CD8-positive, alpha-beta memory T cell (primary cell): ENCODE measurements at regions of chr18 and their contacts with region 1.

Region 1: DNA sequence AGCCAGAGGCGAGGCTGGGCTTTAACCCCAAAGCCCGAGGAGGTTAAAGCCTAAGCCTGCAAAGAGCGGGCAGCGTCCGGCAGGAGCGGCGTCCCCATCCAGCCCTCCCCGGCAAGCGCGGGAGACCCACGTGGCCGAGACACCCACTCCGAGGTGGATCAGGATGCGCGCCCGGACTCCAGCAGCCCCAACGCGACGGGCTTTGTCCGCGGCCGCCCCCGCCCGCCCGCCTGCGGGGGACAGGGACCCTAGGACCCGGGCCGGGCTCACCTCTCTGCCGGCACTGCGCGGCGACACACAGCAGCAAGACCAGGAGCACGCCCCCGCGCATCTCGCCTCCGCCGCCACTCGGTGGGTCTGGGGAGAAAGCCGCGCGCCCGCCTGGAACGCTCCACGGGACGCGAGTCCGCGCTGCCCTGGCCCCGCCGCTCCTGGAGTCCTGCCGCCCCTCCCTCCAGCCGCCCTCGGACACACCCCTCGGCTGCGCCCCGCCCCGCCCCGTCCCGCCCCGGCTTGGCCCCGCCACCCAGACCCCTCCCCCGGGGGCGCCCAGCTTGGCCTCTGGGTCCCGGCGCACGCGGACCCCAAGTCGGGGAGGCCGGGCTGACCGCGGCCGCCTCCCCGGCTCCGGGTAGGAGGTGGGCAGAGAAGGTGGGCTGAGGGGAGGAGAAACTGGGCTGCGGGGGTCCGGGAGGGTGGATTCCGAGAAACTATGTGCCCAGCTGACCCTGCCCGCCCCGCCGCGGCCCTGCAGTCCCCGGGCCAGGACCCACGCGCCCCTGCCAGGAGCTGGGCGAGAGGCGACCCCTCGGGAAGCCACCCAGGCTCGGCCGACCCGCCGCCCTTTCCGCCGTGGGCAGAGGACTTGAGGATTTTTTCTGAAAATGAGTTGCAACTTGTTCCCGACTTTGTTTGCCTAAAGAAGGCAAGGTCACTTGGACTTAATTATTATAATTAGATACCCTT is at the start of gene LAMA1:
- DNase-seq: no peak
- H3K4me3 ChIP-seq: no peak within 1 kb of the TSS
- H3K4me3 Mint-ChIP-seq: peak within 1 kb of the TSS in 2 of 7 donors; percentile 20 to 27
- H3K27ac ChIP-seq: no peak within 1 kb of the TSS
- H3K27ac Mint-ChIP-seq: no peak within 1 kb of the TSS
- H3K4me1 ChIP-seq: no peaks in the 10 kb centered on the region
- H3K4me1 Mint-ChIP-seq: peaks cover 0 to 5% (median 2%) of the 10 kb centered on the region in 3 donors
- H3K27me3 ChIP-seq: no peaks in the 10 kb centered on the region
- H3K27me3 Mint-ChIP-seq: peaks cover 12 to 30% of the 10 kb centered on the region in 2 donors
- total RNA-seq, gene LAMA1: not detected

Region 2: DNA sequence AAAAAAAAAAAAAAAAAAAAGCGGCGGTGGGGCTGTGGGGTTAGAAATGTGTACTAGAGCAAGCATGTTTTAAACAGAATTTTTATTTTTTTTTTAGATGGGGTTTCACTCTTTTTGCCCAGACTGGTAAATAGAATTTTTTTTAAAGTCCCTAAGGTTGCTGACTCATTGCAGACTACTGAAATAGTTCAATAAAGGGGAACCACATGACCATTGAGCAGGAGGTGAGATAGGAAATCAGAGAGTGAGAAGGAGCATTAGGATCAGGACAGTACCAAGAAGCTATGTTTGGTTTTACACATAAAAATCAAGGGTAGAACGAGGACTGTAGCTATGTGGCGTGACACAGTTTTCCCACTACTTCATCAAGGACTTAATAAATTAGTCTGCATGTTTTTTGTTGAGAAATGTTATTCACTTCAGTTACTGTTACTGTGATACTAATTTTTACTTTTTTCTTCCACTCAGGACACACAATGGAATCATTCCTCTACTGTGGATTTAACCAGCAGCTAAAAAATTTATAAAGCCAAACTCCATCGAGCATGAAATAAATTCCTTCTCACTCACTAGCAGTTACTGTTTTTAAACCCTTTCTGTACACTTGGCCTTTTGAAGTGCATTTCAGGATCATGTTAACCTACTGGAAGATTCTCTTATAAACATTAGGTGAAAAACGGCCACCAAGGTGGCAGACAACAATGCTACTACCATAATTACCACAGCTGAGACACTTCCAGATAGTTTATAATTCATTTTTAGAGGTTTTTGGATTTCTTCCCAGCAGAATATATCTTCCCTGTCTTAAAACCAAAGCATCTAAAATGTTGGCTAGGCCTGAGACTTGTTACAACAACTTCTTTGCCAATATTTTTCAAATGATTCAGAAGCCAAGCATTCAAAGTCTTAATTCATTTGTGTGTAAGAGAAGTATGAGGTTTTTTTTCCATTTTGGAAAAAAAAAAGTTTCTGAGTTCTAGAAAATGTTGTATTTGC is 33.3 kb before region 1 on chr18:
- CTCF ChIA-PET with region 1: no interaction called
- POLR2A ChIA-PET with region 1: no interaction called
- DNase-seq: no peak
- H3K4me3 ChIP-seq: no peak overlapping the region
- H3K4me3 Mint-ChIP-seq: no peak overlapping the region
- H3K27ac ChIP-seq: no peak overlapping the region
- H3K27ac Mint-ChIP-seq: no peak overlapping the region
- H3K4me1 ChIP-seq: no peaks in the 10 kb centered on the region
- H3K4me1 Mint-ChIP-seq: no peaks in the 10 kb centered on the region
- H3K27me3 ChIP-seq: no peaks in the 10 kb centered on the region
- H3K27me3 Mint-ChIP-seq: no peaks in the 10 kb centered on the region

Region 3: GRCh38 chr18:7094432-7094831 is 23.2 kb before region 1 on chr18:
- CTCF ChIA-PET with region 1: no interaction called
- POLR2A ChIA-PET with region 1: no interaction called
- DNase-seq: no peak
- H3K4me3 ChIP-seq: no peak overlapping the region
- H3K4me3 Mint-ChIP-seq: no peak overlapping the region
- H3K27ac ChIP-seq: no peak overlapping the region
- H3K27ac Mint-ChIP-seq: no peak overlapping the region
- H3K4me1 ChIP-seq: no peaks in the 10 kb centered on the region
- H3K4me1 Mint-ChIP-seq: no peaks in the 10 kb centered on the region
- H3K27me3 ChIP-seq: no peaks in the 10 kb centered on the region
- H3K27me3 Mint-ChIP-seq: no peaks in the 10 kb centered on the region

Region 4: DNA sequence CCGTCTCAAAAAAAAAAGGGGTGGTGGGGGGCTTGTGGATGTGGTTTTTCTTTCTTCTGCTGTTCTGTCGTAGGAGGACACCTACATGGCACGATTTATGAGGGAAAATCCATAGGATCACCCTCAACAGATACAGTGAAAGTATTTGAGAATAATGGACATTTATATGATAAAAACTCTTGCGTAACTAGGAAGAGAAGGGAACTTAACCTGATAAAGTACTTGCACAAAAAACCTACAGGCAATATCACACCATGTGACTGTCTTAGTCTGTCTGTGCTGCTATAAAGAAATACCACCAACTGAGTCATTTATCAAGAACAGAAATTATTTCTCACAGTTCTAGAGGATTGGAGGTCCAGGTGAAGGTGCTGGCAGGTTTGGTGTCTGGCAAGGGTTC is 21.7 kb after region 1 on chr18:
- CTCF ChIA-PET with region 1: no interaction called
- POLR2A ChIA-PET with region 1: interaction called, 10 read pairs
- DNase-seq: no peak
- H3K4me3 ChIP-seq: no peak overlapping the region
- H3K4me3 Mint-ChIP-seq: no peak overlapping the region
- H3K27ac ChIP-seq: no peak overlapping the region
- H3K27ac Mint-ChIP-seq: no peak overlapping the region
- H3K4me1 ChIP-seq: no peaks in the 10 kb centered on the region
- H3K4me1 Mint-ChIP-seq: no peaks in the 10 kb centered on the region
- H3K27me3 ChIP-seq: no peaks in the 10 kb centered on the region
- H3K27me3 Mint-ChIP-seq: no peaks in the 10 kb centered on the region